ENCODE measurements at regions of chr16 and their contacts with region 1.

Region 1: DNA sequence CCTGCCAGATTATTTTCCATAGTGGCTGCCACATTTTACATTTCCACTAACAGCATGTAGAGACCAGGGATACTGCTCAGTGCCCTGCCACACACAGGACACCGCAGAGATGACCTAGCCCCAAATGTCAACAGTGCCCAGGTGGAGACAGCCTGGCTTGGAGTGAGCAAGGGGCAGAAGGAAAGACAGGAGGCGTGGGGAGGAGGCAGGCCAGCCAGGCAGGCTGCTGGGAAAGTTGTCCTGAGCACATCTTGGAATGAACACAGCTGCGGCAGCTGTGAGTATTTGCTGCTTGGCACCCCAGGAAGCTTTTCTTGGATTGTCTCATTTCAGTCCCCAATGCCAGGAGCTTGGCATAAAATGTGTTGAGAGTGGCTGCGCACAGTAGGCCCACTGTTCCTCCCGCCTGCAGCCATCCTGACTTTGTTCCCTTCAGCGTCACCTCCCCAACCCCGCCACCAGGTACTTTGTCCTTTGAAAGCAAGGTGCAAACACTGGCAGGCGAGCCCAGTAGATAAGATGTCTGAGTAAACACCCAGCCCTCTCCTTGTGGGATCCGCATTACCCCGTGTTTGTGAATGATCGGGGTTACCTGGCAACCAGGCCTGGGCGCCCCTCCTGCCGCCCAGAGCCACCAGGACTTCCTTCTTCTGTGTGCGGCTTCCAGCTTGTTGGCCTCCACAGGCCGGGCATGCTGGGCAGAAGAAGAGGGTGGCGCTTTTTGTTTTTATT is 114.0 kb downstream of the CMIP start:
- DNase-seq: no peak
- ATAC-seq: peak; percentile 51 to 55 (median 52)
- H3K4me3 ChIP-seq: no peak overlapping the region
- H3K4me3 Mint-ChIP-seq: no peak overlapping the region
- H3K27ac ChIP-seq: no peak overlapping the region
- H3K27ac Mint-ChIP-seq: peak overlapping the region; percentile 51 to 70
- H3K4me1 ChIP-seq: peaks cover 35% of the 10 kb centered on the region
- H3K4me1 Mint-ChIP-seq: peaks cover 64 to 67% of the 10 kb centered on the region in 2 donors
- H3K27me3 ChIP-seq: no peaks in the 10 kb centered on the region
- H3K27me3 Mint-ChIP-seq: no peaks in the 10 kb centered on the region
- CTCF ChIP-seq: no peak

Region 2: GRCh38 chr16:81531419-81531821 is 27.2 kb before region 1 on chr16:
- intact Hi-C with region 1: no loop called
- DNase-seq: no peak
- ATAC-seq: no peak
- H3K4me3 ChIP-seq: no peak overlapping the region
- H3K4me3 Mint-ChIP-seq: no peak overlapping the region
- H3K27ac ChIP-seq: no peak overlapping the region
- H3K27ac Mint-ChIP-seq: no peak overlapping the region
- H3K4me1 ChIP-seq: peaks cover 19% of the 10 kb centered on the region
- H3K4me1 Mint-ChIP-seq: peaks cover 53 to 62% of the 10 kb centered on the region in 2 donors
- H3K27me3 ChIP-seq: no peaks in the 10 kb centered on the region
- H3K27me3 Mint-ChIP-seq: no peaks in the 10 kb centered on the region
- CTCF ChIP-seq: no peak

Region 3: DNA sequence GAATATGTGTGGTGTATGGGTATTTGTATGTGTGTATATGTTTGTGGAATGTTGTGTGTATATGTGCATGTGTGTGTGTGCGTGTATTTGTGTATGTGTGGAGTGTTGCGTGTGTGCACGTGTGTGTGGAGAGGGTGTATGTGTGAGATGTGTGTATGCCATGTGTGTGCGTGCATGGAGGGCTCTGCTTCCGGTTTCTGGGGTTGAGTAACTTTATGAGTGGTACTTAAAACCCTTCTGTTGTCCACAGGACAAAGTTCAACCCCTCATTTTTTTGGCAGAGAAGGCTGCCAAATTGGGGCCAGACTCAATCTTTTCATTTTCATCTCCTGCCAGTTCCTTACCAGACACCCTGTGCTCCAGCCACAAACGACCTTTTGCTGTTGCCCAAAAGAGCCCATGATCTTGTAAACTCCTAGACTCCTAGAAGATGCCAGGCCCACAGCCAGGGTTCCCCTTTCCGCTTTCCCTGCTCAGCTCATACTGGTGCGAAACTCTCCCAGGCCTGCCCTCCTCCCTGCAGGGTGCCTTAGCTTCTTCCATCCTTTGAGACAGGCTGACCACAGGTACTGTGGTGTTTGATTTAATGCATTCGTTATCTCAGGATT is 13.8 kb before region 1 on chr16:
- intact Hi-C with region 1: loop called (anchors 2 kb)
- DNase-seq: no peak
- ATAC-seq: peak; percentile 21 to 46 (median 43)
- H3K4me3 ChIP-seq: no peak overlapping the region
- H3K4me3 Mint-ChIP-seq: peak overlapping the region; percentile 13
- H3K27ac ChIP-seq: no peak overlapping the region
- H3K27ac Mint-ChIP-seq: peak overlapping the region; percentile 4 to 62
- H3K4me1 ChIP-seq: peaks cover 44% of the 10 kb centered on the region
- H3K4me1 Mint-ChIP-seq: peaks cover 61 to 68% of the 10 kb centered on the region in 2 donors
- H3K27me3 ChIP-seq: no peaks in the 10 kb centered on the region
- H3K27me3 Mint-ChIP-seq: no peaks in the 10 kb centered on the region
- CTCF ChIP-seq: no peak

Measured in natural killer cell (primary cell).